AG04450 (cell line): ENCODE measurements at regions of chr1 and their contacts with region 1.

Region 1: DNA sequence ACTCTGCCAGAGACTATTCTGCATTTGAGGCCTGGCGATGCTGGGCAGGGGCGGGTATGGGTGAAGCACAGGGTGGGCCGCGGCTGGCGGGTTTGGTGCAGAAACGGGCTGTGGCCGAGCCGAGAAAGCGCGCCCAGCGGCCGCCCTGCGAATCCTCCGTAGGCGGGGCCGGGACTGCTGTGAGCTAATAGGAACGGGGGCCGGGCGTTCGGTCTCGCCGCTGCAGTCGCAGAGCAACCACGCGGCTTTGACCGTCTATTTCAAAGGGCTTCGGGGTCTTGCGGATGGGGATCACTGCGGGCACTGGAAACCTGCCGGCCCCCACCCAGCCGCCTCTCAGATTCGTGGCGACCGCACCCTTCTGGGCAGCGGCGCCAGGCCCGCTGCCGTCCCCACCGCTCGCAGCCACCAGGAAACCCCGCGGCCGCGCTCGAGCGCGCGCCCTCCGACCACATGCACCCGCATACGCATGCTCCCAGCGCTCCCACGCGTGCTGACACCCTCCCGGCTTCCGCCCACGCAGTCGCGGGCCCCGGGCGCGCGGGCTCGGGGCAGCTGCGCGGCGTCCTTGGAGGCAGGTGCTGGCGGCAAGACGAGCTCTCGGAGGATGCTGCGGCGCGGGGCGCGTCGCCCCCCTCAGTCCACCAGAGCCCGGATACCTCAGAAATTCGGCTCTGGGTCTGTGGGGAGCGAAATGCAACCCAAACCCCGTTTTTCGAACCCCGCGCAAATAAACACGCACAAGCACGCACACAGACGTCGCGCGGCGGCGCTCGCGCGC is 32.6 kb downstream of the DNTTIP2 start:
- DNase-seq: peak; percentile 49
- H3K4me3 ChIP-seq: peak overlapping the region; percentile 83
- H3K27ac ChIP-seq: peak overlapping the region; percentile 98
- H3K27me3 ChIP-seq: no peaks in the 10 kb centered on the region
- CTCF ChIP-seq: peak; percentile 45

Region 2: DNA sequence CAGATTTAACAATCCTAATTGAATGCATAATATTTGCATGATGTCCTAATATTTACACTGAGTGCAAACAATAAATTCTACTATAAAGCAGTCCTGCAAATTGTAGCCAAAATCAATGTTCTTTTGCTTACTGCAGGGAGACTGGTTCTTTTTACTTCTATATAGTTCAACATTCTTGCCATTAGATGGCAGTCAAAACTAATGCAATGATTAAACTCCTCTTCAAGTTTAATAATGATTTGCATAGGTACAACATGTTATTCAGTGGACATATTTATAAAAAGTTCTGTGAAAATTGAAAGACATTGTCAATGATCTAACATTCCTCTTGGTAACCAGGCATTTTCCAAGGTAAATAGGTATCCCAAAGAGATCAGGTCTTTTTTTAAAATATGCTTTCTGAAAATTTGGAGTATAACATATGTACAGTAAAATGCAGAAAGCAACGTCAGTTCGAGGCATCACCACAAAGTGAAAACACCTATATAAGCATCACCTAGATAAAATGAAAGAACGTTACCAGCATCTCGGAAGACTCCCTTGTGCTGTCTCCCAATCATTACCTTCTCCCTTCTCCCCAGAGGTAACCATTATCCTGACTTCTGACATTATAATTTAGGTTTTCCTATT is 408.3 kb before region 1 on chr1:
- CTCF ChIA-PET with region 1: interaction called, 12 read pairs
- POLR2A ChIA-PET with region 1: no interaction called
- DNase-seq: peak; percentile 20
- H3K4me3 ChIP-seq: no peak overlapping the region
- H3K27ac ChIP-seq: no peak overlapping the region
- H3K27me3 ChIP-seq: peaks cover 17% of the 10 kb centered on the region
- CTCF ChIP-seq: peak; percentile 62

Region 3: DNA sequence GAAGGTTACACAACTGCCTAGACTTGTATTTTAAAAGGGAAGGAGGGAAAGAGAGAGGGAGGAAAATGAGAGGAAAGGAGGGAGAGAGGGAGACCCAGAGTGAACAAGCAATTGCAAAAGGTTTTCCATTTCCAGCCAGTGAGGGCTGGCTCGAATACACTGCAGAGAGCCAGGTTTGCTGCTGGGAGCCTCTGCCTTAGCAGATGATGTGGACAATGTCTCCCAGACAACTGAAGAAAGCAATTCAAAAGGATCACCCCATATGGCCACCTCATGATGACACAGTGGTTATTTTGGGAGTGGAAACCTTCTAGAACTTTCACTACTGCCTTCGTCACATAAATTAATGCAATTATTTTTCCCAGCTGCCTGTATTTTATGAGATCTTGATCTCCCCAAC is 251.1 kb before region 1 on chr1:
- CTCF ChIA-PET with region 1: interaction called, 10 read pairs
- POLR2A ChIA-PET with region 1: no interaction called
- DNase-seq: no peak
- H3K4me3 ChIP-seq: no peak overlapping the region
- H3K27ac ChIP-seq: no peak overlapping the region
- H3K27me3 ChIP-seq: no peaks in the 10 kb centered on the region
- CTCF ChIP-seq: no peak

Region 4: DNA sequence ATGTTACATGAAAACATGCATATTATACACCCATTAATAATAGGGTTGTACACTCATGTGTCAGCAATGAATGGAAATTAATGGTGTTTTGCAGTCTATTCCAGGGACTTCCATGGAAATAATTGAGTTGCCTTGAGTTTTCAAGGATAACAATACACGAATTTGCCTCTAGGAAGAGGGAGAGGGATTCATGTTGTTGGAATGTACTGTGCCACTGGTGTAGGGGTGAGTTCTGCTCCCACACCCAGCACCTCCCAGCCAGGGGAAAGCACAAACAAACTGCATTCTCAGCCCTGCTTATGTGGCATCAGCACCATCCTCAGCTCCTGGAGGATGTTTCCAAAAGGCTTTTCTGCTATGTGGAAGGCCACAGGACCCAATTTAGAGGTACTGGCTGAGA is 222.5 kb before region 1 on chr1:
- CTCF ChIA-PET with region 1: interaction called, 217 read pairs
- POLR2A ChIA-PET with region 1: interaction called, 5 read pairs
- DNase-seq: no peak
- H3K4me3 ChIP-seq: no peak overlapping the region
- H3K27ac ChIP-seq: no peak overlapping the region
- H3K27me3 ChIP-seq: no peaks in the 10 kb centered on the region
- CTCF ChIP-seq: no peak

Region 5: DNA sequence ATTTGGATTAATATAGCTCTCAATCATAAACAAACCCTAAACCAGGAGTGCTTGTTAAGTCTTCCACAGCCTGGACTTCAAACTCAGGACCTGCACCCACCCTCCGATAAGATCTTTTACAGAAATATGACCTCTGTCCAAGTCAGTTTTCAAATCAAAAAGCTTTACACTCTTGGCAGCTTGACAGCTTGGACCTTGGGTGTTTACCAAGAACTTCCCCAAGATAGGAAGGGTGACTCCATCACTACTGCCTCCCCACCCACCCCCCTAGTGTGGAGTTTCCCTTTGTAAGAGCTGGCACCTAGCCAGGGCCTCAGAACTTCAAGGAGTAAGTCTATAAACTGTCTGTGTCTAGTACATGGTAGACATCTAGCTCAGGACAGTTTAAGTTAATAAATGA is 174.3 kb before region 1 on chr1:
- CTCF ChIA-PET with region 1: interaction called, 29 read pairs
- POLR2A ChIA-PET with region 1: interaction called, 4 read pairs
- DNase-seq: no peak
- H3K4me3 ChIP-seq: no peak overlapping the region
- H3K27ac ChIP-seq: peak overlapping the region; percentile 42
- H3K27me3 ChIP-seq: no peaks in the 10 kb centered on the region
- CTCF ChIP-seq: no peak